ENCODE measurements at regions of chr13 and their contacts with region 1.

Region 1: DNA sequence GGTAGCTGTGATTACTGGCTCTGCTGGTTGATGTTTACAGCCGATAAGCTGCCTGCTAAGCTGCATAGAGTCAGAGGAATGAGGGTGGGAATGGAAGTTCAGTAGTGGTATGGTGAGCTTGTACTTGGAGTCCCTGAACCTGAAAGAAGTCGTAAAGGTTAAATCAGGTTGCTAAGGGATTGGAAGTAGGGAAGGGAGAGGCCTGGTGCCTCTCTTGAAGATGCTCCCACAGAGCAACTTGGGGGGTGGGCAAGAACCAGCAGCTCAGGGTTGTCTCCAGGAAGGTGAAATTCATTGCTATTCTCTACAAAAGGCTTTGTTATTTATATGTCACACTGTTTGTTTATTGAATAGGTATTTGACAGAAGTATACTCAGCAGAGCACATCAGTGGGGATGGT is 73.8 kb upstream of the OLFM4 start:
- DNase-seq: no peak
- ATAC-seq: no peak
- H3K4me3 Mint-ChIP-seq: no peak overlapping the region
- H3K27ac Mint-ChIP-seq: no peak overlapping the region
- H3K4me1 Mint-ChIP-seq: no peaks in the 10 kb centered on the region
- H3K27me3 Mint-ChIP-seq: peaks cover 2% of the 10 kb centered on the region

Region 2: DNA sequence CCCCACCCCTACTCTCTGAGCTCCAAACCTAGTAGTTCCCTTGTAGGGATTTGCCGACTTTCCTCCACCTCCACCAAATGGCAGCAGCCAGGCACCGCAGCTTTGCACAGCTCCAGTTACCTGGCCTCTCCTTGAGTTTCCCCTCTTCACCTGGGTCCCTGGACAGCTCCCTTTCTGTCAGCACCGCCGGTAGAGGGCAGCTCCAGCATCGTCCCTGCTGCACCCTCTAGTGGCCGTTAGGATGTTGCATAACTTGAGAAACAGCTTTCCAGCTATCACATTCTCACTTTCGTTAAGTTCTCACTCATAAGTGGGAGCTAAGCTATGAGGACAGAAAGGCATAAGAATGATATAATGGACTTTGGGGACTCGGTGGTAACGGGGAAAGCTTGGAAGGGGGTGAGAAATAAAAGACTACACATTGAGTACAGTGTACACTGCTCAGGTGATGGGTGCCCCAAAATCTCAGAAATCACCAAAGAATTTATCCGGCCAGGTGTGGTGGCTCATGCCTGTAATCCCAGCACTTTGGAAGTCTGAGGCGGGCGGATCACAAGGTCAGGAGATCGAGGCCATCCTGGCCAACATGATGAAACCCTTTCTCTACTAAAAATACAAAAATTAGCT is 13.3 kb after region 1 on chr13:
- CTCF ChIA-PET with region 1: interaction called, 11 read pairs
- POLR2A ChIA-PET with region 1: no interaction called
- intact Hi-C with region 1: no loop called
- DNase-seq: peak; percentile 80
- ATAC-seq: peak; percentile 79
- H3K4me3 Mint-ChIP-seq: no peak overlapping the region
- H3K27ac Mint-ChIP-seq: no peak overlapping the region
- H3K4me1 Mint-ChIP-seq: no peaks in the 10 kb centered on the region
- H3K27me3 Mint-ChIP-seq: peaks cover 7% of the 10 kb centered on the region

Measured in activated CD4-positive, alpha-beta T cell treated with anti-CD3 and anti-CD28 coated beads for 36 hours (primary cell).